Mucosa of descending colon (tissue), 3 donors: ENCODE measurements at regions of chr1 and their contacts with region 1.

Region 1: GRCh38 chr1:84603941-84604830 is 29.9 kb upstream of the CTBS start:
- DNase-seq: no peak
- ATAC-seq: peak; percentile 24
- H3K4me3 ChIP-seq: no peak overlapping the region
- H3K4me1 ChIP-seq: no peaks in the 10 kb centered on the region
- CTCF ChIP-seq: no peak

Region 2: GRCh38 chr1:84406346-84406861 is 197.8 kb before region 1 on chr1:
- intact Hi-C with region 1: no loop called
- DNase-seq: peak in 1 of 3 donors; percentile 63
- ATAC-seq: peak; percentile 92
- H3K4me3 ChIP-seq: no peak overlapping the region
- H3K4me1 ChIP-seq: peaks cover 24% of the 10 kb centered on the region
- CTCF ChIP-seq: no peak

Region 3: GRCh38 chr1:84442256-84442655 is 161.9 kb before region 1 on chr1:
- intact Hi-C with region 1: loop called in 1 of 2 experiments (anchors 10 kb)
- DNase-seq: peak in 1 of 3 donors; percentile 38
- ATAC-seq: peak; percentile 95
- H3K4me3 ChIP-seq: no peak overlapping the region
- H3K4me1 ChIP-seq: no peaks in the 10 kb centered on the region
- CTCF ChIP-seq: no peak

Region 4: DNA sequence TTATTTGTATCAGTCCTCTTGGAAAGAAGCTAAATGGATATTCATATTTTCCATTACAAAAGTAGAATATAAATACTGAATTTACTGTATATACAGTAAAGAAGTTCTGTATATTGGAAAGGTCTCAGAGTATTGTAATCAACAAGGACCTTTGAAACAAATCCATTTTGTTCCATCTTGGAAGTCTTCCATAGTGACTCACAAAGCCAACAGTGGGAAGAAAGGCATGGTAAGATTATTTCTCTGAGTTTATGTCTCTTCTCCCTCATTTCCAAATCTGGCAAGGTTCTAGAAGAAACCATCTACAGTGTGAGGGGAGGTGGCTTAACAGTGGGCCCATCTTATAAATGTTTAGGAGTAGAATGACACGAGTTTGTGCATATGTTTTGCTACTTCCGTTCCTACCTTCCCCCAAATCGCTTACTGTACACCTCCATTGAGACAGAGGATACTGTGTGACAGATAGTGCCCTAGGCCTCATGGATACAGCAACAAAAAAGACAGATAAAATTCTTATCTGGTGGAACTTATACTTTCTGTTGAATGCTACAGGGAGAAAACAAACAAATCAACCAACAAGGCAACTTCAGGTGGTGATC is 108.2 kb after region 1 on chr1:
- intact Hi-C with region 1: no loop called
- DNase-seq: no peak
- ATAC-seq: no peak
- H3K4me3 ChIP-seq: no peak overlapping the region
- H3K4me1 ChIP-seq: no peaks in the 10 kb centered on the region
- CTCF ChIP-seq: no peak